ENCODE measurements at regions of chr22 and their contacts with region 1.

Region 1: GRCh38 chr22:31569126-31569525 is 72.8 kb downstream of the SFI1 start:
- DNase-seq: no peak
- H3K4me3 ChIP-seq: no peak overlapping the region
- H3K27ac ChIP-seq: no peak overlapping the region
- H3K4me1 ChIP-seq: no peaks in the 10 kb centered on the region
- H3K27me3 ChIP-seq: no peaks in the 10 kb centered on the region

Region 2: GRCh38 chr22:31504282-31504681 is 64.8 kb before region 1 on chr22:
- in situ Hi-C with region 1: no loop called
- DNase-seq: peak; percentile 71
- H3K4me3 ChIP-seq: no peak overlapping the region
- H3K27ac ChIP-seq: peak overlapping the region; percentile 63
- H3K4me1 ChIP-seq: peaks cover 11% of the 10 kb centered on the region
- H3K27me3 ChIP-seq: no peaks in the 10 kb centered on the region

Region 3: DNA sequence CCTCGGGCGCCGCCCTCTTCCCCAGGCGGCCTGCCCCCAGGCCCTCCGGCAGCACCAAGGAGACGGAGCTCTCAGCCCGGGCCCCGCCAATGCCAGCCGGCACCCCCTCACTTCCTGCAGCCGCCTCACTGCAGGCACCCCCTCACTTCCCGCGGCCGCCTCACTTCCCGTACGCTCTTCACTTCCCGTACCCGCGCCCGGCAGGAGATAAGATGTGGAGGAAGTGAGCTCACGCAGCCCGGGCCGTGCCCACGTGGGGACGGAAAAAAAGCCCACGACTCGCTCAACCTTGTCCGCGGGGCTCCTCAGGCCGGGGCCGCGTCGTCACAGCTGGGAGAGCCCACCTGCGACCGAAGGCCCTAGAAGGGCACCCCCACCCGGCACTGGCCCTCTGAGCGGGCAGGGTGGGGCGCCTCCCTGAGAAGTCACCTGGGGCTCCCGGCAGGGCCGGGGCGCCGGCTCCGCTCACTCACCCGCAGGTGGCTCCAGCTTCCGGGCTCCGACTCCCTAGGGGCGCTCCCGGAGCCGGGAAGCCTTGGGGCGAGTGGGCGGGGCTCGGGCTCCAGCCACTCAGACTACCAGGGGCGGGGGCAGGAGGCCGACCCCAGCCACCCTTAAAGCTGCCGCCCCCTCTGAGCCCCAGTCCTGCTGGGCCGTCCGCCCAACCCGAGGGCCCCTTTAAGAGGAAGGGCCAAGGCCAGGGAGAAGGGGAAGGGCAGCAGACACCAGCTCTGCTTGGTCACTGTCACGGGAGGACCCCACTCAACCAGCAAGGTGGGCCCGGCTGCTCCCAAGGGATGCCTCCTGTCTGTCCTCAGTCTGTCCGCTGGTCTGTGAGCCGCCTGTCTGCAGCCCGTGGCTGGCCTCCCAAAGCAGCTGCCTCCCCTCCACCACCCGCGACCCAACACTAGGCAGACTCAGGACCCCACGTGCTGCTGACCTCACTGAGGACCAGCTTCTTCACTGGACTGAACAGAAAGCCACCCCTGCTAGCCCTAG is 61.5 kb after region 1 on chr22:
- in situ Hi-C with region 1: loop called (anchors 5 kb)
- DNase-seq: peak; percentile 87
- H3K4me3 ChIP-seq: peak overlapping the region; percentile 88
- H3K27ac ChIP-seq: peak overlapping the region; percentile 75
- H3K4me1 ChIP-seq: peaks cover 5% of the 10 kb centered on the region; the same call in 1 of the 2 replicates
- H3K27me3 ChIP-seq: no peaks in the 10 kb centered on the region

Measured in GM23248 (cell line).